Activated CD4-positive, alpha-beta memory T cell treated with anti-CD3 and anti-CD28 coated beads, Interleukin-2, amount 10 ng/mL, durations not matched to agents 7 days and 5 days (primary cell): ENCODE measurements at regions of chr1 and their contacts with region 1.

Region 1: GRCh38 chr1:117059678-117060440 is at the start of gene TTF2:
- DNase-seq: peak; percentile 98
- H3K4me3 Mint-ChIP-seq: no peak within 1 kb of the TSS
- H3K27ac Mint-ChIP-seq: no peak within 1 kb of the TSS
- H3K4me1 Mint-ChIP-seq: peaks cover 61% of the 10 kb centered on the region
- H3K27me3 Mint-ChIP-seq: no peaks in the 10 kb centered on the region
- total RNA-seq, gene TTF2: 78.0 to 83.8 TPM

Region 2: GRCh38 chr1:116708255-116708865 is 351.5 kb before region 1 on chr1:
- CTCF ChIA-PET with region 1: no interaction called
- POLR2A ChIA-PET with region 1: no interaction called
- DNase-seq: no peak
- H3K4me3 Mint-ChIP-seq: no peak overlapping the region
- H3K27ac Mint-ChIP-seq: no peak overlapping the region
- H3K4me1 Mint-ChIP-seq: peaks cover 7% of the 10 kb centered on the region
- H3K27me3 Mint-ChIP-seq: peaks cover 6% of the 10 kb centered on the region

Region 3: DNA sequence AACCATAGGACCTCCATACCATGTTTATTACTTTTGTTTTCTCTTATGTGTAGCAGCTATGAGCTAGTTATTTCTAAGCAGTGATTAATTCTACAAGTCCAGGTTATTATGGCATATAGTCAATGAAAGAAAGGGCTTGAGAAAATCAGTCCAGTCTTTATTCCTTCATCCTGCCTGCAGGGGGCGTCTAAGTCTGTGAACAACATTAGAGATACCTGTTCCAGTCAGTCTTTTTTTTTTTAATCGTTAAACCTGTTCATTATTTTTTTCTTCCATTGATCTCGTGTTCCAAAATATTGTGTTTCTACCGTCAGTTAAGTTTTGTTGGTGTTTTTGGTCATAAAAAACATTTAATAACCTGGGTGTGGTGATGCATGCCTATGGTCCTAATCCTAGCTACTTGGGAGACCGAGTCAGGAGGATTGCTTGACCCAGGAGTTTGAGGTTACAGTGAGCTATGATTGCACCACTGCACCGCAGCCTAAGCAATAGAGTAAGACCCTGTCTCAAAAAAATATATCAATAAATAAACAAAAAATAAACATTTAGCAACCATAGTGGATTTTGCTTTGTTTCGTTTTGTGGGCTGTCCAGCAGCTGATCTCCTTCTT is 335.0 kb before region 1 on chr1:
- CTCF ChIA-PET with region 1: interaction called, 17 read pairs
- POLR2A ChIA-PET with region 1: interaction called, 5 read pairs
- DNase-seq: peak; percentile 81
- H3K4me3 Mint-ChIP-seq: no peak overlapping the region
- H3K27ac Mint-ChIP-seq: no peak overlapping the region
- H3K4me1 Mint-ChIP-seq: peaks cover 23% of the 10 kb centered on the region
- H3K27me3 Mint-ChIP-seq: no peaks in the 10 kb centered on the region

Region 4: DNA sequence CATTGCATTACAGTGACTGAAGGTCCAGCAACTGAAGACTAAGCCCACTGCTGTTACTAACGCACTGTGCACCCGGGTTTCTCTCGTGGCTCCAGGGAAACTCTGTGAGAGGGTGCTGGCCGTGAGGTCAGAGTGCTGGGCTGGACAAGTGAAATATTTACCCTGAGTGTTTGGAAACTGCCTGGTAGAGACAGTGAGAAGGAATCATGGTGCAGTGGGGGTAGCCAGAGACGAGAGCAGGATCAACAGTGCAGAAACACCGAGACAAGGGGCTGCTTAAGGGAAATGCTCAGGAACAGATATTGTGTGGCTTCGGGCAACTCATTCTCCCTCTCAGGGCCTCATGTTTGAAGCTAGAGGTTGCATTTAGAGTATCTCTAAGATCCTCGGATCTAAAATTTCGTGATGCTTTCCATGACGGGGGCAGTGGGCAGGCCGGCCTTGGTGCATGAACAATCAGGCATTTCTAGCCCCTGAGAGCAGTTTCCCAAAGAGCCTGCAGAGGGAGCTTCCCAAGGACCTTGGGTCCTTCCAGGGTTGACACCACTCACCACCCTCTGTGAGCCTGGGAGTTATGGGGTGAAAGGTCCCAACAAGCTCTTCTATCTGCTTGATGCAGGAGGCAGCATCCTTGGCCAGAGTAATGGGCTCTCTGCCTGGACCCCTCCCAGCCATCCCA is 295.9 kb before region 1 on chr1:
- CTCF ChIA-PET with region 1: interaction called, 7 read pairs
- POLR2A ChIA-PET with region 1: interaction called, 84 read pairs
- DNase-seq: peak; percentile 67
- H3K4me3 Mint-ChIP-seq: peak overlapping the region; percentile 78
- H3K27ac Mint-ChIP-seq: peak overlapping the region; percentile 99
- H3K4me1 Mint-ChIP-seq: peaks cover 96% of the 10 kb centered on the region
- H3K27me3 Mint-ChIP-seq: no peaks in the 10 kb centered on the region

Region 5: GRCh38 chr1:116817582-116818064 is 242.2 kb before region 1 on chr1:
- CTCF ChIA-PET with region 1: interaction called, 10 read pairs
- POLR2A ChIA-PET with region 1: interaction called, 29 read pairs
- DNase-seq: peak; percentile 78
- H3K4me3 Mint-ChIP-seq: no peak overlapping the region
- H3K27ac Mint-ChIP-seq: peak overlapping the region; percentile 53
- H3K4me1 Mint-ChIP-seq: peaks cover 63% of the 10 kb centered on the region
- H3K27me3 Mint-ChIP-seq: no peaks in the 10 kb centered on the region

Region 6: GRCh38 chr1:116987256-116987555 is 72.7 kb before region 1 on chr1:
- CTCF ChIA-PET with region 1: no interaction called
- POLR2A ChIA-PET with region 1: interaction called, 18 read pairs
- DNase-seq: peak; percentile 71
- H3K4me3 Mint-ChIP-seq: peak overlapping the region; percentile 63
- H3K27ac Mint-ChIP-seq: peak overlapping the region; percentile 51
- H3K4me1 Mint-ChIP-seq: peaks cover 29% of the 10 kb centered on the region
- H3K27me3 Mint-ChIP-seq: peaks cover 2% of the 10 kb centered on the region

Region 7: DNA sequence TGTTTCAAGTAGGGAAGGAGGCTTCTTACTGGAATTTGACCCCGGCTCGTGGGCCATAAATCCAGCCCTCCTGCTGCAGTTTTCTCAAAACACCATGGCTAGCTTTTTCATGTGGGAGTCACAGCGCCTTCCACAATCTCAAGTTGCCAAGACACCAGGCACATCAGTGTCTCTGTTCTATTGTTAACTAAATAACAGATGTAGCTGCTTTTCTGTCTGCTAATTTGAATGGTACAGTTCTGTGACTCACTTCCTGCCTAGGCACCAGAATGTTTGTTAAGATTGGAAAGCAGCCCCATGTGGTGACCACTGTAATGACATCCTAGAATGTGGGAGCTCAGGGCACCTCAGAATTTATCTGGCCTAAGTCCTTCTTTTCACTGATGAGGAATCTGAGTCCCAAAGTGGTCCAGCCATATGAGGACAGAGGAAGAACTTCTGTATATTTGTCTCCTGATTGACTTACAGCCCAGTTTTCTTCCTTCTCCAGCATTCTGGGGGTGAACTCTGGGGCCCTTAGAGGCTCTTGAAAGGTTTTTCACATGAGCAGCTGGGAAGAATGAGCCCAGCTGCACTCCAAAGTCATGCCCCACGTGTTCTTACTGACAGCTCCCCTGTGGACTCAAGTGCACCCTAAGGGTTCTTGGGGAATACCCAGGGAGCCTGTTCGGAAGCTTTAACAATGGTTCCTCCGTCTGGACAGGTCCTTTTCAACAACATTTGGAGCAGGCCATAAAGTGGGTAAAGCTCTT is 34.2 kb after region 1 on chr1:
- CTCF ChIA-PET with region 1: interaction called, 4 read pairs
- POLR2A ChIA-PET with region 1: interaction called, 30 read pairs
- DNase-seq: peak; percentile 55
- H3K4me3 Mint-ChIP-seq: no peak overlapping the region
- H3K27ac Mint-ChIP-seq: peak overlapping the region; percentile 15
- H3K4me1 Mint-ChIP-seq: peaks cover 19% of the 10 kb centered on the region
- H3K27me3 Mint-ChIP-seq: no peaks in the 10 kb centered on the region